Ovary (tissue), 10 donors: ENCODE measurements at regions of chr15 and their contacts with region 1.

Region 1: GRCh38 chr15:34101366-34102175 is at the starts of genes EMC7 and PGBD4:
- DNase-seq: peak; percentile 98 to 99 (median 98)
- H3K4me3 ChIP-seq: peak within 1 kb of the TSS; percentile 87
- H3K27ac ChIP-seq: peak within 1 kb of the TSS; percentile 13 to 70
- H3K4me1 ChIP-seq: peaks cover 2% of the 10 kb centered on the region
- H3K27me3 ChIP-seq: no peaks in the 10 kb centered on the region
- CTCF ChIP-seq: no peak
- EP300 ChIP-seq: no peak
- POLR2A ChIP-seq: peak; percentile 46
- total RNA-seq, gene EMC7: 27.4 to 57.4 (median 41.2) TPM
- total RNA-seq, gene PGBD4: 0.69 to 1.6 (median 1.1) TPM

Region 2: DNA sequence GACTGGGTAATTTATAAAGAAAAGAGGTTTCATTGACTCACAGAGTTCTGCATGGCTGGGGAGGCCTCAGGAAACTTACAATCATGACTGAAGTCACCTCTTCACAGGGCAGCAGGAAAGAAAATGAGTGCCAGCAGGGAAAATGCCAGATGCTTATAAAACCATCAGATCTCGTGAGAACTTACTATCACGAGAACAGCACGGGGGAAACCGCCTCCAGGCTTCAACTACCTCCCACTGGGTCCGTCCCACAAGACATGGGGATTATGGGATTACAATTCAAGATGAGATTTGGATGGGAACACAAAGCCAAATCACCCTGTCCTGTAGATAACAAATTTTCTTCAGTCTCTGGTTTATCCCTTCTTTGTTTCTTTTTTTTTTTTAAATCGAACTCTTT is 31.6 kb before region 1 on chr15:
- intact Hi-C with region 1: no loop called
- DNase-seq: no peak
- H3K4me3 ChIP-seq: no peak overlapping the region
- H3K27ac ChIP-seq: no peak overlapping the region
- H3K4me1 ChIP-seq: no peaks in the 10 kb centered on the region
- H3K27me3 ChIP-seq: no peaks in the 10 kb centered on the region
- CTCF ChIP-seq: no peak
- EP300 ChIP-seq: no peak
- POLR2A ChIP-seq: no peak

Region 3: GRCh38 chr15:34122771-34123183 is 21.2 kb after region 1 on chr15:
- intact Hi-C with region 1: no loop called
- DNase-seq: no peak
- H3K4me3 ChIP-seq: no peak overlapping the region
- H3K27ac ChIP-seq: no peak overlapping the region
- H3K4me1 ChIP-seq: no peaks in the 10 kb centered on the region
- H3K27me3 ChIP-seq: no peaks in the 10 kb centered on the region
- CTCF ChIP-seq: no peak
- EP300 ChIP-seq: no peak
- POLR2A ChIP-seq: no peak

Region 4: GRCh38 chr15:34223904-34224596 is 122.5 kb after region 1 on chr15:
- intact Hi-C with region 1: loop called in 2 of 4 experiments (anchors 2 to 5 kb)
- DNase-seq: no peak
- H3K4me3 ChIP-seq: peak overlapping the region; percentile 58
- H3K27ac ChIP-seq: peak overlapping the region; percentile 3 to 76
- H3K4me1 ChIP-seq: peaks cover 7% of the 10 kb centered on the region
- H3K27me3 ChIP-seq: no peaks in the 10 kb centered on the region
- CTCF ChIP-seq: no peak
- EP300 ChIP-seq: no peak
- POLR2A ChIP-seq: no peak